ENCODE measurements at regions of chr14 and their contacts with region 1.

Region 1: GRCh38 chr14:74762917-74763802 is at the start of gene YLPM1:
- DNase-seq: peak; percentile 92
- H3K4me3 Mint-ChIP-seq: peak within 1 kb of the TSS; percentile 98
- H3K27ac Mint-ChIP-seq: peak within 1 kb of the TSS; percentile 97
- H3K4me1 Mint-ChIP-seq: peaks cover 43% of the 10 kb centered on the region
- H3K27me3 Mint-ChIP-seq: peaks cover 1% of the 10 kb centered on the region
- total RNA-seq, gene YLPM1: 70.4 and 73.7 TPM in 2 replicates

Region 2: DNA sequence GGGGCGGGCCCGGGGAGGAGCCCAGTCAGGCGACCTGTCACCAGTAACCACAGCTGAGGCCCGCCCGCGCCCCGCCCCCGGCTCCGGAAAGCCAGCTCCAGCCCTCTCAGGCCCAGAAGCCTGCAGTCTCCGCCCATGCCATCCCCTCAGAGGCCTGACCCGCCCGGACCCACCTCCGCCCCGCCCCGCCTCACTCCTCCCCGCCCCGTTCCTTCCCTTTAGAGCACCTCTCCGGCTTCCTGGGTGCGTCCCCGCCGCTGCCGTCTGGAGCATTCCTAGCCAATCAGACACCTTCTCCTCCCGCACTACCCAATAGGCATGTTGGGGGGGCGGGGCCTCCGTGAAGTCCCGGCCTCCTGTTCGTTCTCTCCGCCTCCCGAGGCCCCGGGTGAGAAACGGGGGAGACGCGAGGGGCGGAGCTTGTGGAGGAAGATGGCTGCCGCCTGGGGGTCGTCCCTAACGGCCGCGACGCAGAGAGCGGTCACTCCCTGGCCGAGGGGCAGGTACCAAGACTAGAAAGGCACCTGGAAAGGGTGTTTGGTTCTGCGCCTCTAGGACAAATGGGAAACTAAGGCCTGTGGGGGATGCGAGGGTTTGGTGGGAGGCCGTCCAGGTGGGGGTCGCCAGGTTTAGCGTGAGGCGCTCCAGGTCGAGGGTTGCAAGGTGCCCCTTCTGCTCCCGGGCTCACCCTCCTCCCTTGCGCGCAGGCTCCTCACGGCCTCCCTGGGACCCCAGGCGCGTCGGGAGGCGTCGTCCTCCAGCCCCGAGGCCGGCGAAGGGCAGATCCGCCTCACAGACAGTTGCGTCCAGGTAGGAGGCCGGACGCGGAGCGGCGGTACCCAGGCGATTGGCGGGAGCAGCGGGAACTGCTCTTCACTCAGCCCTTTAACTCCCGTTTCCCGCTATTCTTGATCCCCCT is 269.6 kb before region 1 on chr14 and contains the start of gene ISCA2:
- intact Hi-C with region 1: loop called (anchors 5 kb)
- DNase-seq: peak; percentile 99
- H3K4me3 Mint-ChIP-seq: no peak within 1 kb of the TSS
- H3K27ac Mint-ChIP-seq: peak within 1 kb of the TSS; percentile 87
- H3K4me1 Mint-ChIP-seq: peaks cover 24% of the 10 kb centered on the region
- H3K27me3 Mint-ChIP-seq: no peaks in the 10 kb centered on the region
- total RNA-seq, gene ISCA2: 18.8 and 20.2 TPM in 2 replicates

Region 3: GRCh38 chr14:74720526-74720925 is 42.6 kb before region 1 on chr14:
- intact Hi-C with region 1: no loop called
- DNase-seq: no peak
- H3K4me3 Mint-ChIP-seq: no peak overlapping the region
- H3K27ac Mint-ChIP-seq: no peak overlapping the region
- H3K4me1 Mint-ChIP-seq: peaks cover 4% of the 10 kb centered on the region
- H3K27me3 Mint-ChIP-seq: no peaks in the 10 kb centered on the region

Region 4: GRCh38 chr14:74793506-74794168 is 30.5 kb after region 1 on chr14:
- intact Hi-C with region 1: loop called (anchors 2 kb)
- DNase-seq: no peak
- H3K4me3 Mint-ChIP-seq: peak overlapping the region; percentile 79
- H3K27ac Mint-ChIP-seq: peak overlapping the region; percentile 50
- H3K4me1 Mint-ChIP-seq: peaks cover 52% of the 10 kb centered on the region
- H3K27me3 Mint-ChIP-seq: no peaks in the 10 kb centered on the region

Region 5: GRCh38 chr14:75002392-75003249 is 239.5 kb after region 1 on chr14 and contains the start of gene EIF2B2:
- intact Hi-C with region 1: loop called (anchors 1 kb)
- DNase-seq: peak; percentile 99
- H3K4me3 Mint-ChIP-seq: peak within 1 kb of the TSS; percentile 98
- H3K27ac Mint-ChIP-seq: peak within 1 kb of the TSS; percentile 92
- H3K4me1 Mint-ChIP-seq: peaks cover 54% of the 10 kb centered on the region
- H3K27me3 Mint-ChIP-seq: peaks cover 10% of the 10 kb centered on the region
- total RNA-seq, gene EIF2B2: 52.8 and 54.3 TPM in 2 replicates

Region 6: GRCh38 chr14:75258615-75259466 is 495.7 kb after region 1 on chr14:
- intact Hi-C with region 1: loop called (anchors 5 kb)
- DNase-seq: peak; percentile 99
- H3K4me3 Mint-ChIP-seq: peak overlapping the region; percentile 85
- H3K27ac Mint-ChIP-seq: peak overlapping the region; percentile 100
- H3K4me1 Mint-ChIP-seq: peaks cover 23% of the 10 kb centered on the region
- H3K27me3 Mint-ChIP-seq: peaks cover 52% of the 10 kb centered on the region

Measured in activated T-helper 1 cell treated with anti-CD3 and anti-CD28 coated beads, Interleukin-12 subunit alpha, Interleukin-12 subunit beta, Interleukin-2, Interleukin-4 antibody, amounts not matched to agents 30 ng/mL and 10 ng/mL and 1 ng/mL, durations not matched to agents 14 hours and 24 hours and 36 hours (primary cell).